PC-3 (cell line): ENCODE measurements at regions of chr12 and their contacts with region 1.

Region 1: GRCh38 chr12:38508246-38508645 is 191.7 kb downstream of the ALG10B start:
- DNase-seq: peak; percentile 55
- ATAC-seq: peak; percentile 75
- H3K4me3 ChIP-seq: no peak overlapping the region
- H3K27ac ChIP-seq: no peak overlapping the region
- H3K4me1 ChIP-seq: peaks cover 14% of the 10 kb centered on the region
- H3K27me3 ChIP-seq: no peaks in the 10 kb centered on the region
- CTCF ChIP-seq: no peak

Region 2: GRCh38 chr12:38291160-38291559 is 217.1 kb before region 1 on chr12:
- CTCF ChIA-PET with region 1: no interaction called
- POLR2A ChIA-PET with region 1: no interaction called
- intact Hi-C with region 1: no loop called
- DNase-seq: no peak
- ATAC-seq: no peak; the same call in 1 of the 2 replicates
- H3K4me3 ChIP-seq: no peak overlapping the region
- H3K27ac ChIP-seq: no peak overlapping the region
- H3K4me1 ChIP-seq: no peaks in the 10 kb centered on the region
- H3K27me3 ChIP-seq: no peaks in the 10 kb centered on the region
- CTCF ChIP-seq: no peak

Region 3: DNA sequence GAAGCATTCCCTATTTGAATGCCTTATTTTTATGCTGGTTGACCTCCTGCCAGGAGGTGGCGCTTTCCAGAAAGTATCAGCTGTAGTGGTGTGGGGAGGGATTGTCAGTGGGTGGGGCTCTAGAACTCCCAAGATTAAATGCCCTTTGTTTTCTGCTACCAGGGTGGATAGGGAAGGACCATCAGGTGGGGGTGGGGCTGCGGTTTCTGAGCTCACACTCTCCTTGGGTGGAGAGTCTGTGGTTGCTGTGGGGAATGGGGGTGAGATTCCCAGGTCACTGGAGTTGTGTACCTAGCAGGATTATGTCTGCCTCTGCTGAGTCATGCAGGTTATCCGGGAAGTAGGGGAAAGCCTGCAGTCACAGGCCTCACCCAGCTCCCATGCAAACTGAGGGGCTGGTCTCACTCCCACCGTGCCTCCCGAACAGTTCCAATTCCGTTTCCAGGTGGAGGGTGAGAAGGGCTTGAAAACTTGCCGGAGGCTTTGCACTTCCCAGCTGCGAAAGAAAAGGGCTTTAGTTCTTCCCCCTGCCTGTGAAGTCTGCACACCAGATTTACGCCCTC is 123.3 kb before region 1 on chr12:
- CTCF ChIA-PET with region 1: interaction called, 3 read pairs
- POLR2A ChIA-PET with region 1: no interaction called
- intact Hi-C with region 1: loop called (anchors 10 kb)
- DNase-seq: peak; percentile 98
- ATAC-seq: peak; percentile 89
- H3K4me3 ChIP-seq: peak overlapping the region; percentile 45
- H3K27ac ChIP-seq: peak overlapping the region; percentile 96
- H3K4me1 ChIP-seq: peaks cover 48% of the 10 kb centered on the region
- H3K27me3 ChIP-seq: no peaks in the 10 kb centered on the region
- CTCF ChIP-seq: peak; percentile 72

Region 4: DNA sequence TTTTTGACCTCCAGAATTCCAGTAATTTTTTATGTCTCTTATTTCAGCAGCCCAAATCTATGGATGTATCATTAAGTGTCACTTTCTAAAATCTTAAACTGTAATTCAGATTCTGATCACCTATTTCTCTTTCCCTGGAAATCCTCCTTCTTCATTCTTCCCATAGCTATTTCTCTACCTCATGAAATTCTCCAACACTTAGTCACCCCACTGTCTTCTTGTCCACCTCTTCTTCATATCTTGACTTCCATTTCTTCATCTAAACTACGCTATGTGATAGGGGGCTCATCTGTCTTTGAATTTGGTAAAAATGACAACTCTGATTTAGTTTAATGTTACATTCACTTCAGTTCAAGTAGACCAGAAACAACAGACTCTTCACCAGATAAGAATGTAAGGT is 75.9 kb before region 1 on chr12:
- CTCF ChIA-PET with region 1: no interaction called
- POLR2A ChIA-PET with region 1: interaction called, 23 read pairs
- intact Hi-C with region 1: no loop called
- DNase-seq: no peak
- ATAC-seq: no peak
- H3K4me3 ChIP-seq: no peak overlapping the region
- H3K27ac ChIP-seq: no peak overlapping the region
- H3K4me1 ChIP-seq: no peaks in the 10 kb centered on the region
- H3K27me3 ChIP-seq: no peaks in the 10 kb centered on the region
- CTCF ChIP-seq: no peak